Spleen (tissue), 13 donors: ENCODE measurements at regions of chr2 and their contacts with region 1.

Region 1: GRCh38 chr2:20962939-20963557 is 80.8 kb downstream of the APOB start:
- DNase-seq: peak; percentile 81
- H3K4me3 ChIP-seq: no peak overlapping the region
- H3K27ac ChIP-seq: no peak overlapping the region
- H3K4me1 ChIP-seq: no peaks in the 10 kb centered on the region
- H3K27me3 ChIP-seq: peaks cover 0 to 75% (median 3%) of the 10 kb centered on the region in 7 donors
- CTCF ChIP-seq: peak; percentile 64 to 89 (median 84)
- POLR2A ChIP-seq: no peak

Region 2: DNA sequence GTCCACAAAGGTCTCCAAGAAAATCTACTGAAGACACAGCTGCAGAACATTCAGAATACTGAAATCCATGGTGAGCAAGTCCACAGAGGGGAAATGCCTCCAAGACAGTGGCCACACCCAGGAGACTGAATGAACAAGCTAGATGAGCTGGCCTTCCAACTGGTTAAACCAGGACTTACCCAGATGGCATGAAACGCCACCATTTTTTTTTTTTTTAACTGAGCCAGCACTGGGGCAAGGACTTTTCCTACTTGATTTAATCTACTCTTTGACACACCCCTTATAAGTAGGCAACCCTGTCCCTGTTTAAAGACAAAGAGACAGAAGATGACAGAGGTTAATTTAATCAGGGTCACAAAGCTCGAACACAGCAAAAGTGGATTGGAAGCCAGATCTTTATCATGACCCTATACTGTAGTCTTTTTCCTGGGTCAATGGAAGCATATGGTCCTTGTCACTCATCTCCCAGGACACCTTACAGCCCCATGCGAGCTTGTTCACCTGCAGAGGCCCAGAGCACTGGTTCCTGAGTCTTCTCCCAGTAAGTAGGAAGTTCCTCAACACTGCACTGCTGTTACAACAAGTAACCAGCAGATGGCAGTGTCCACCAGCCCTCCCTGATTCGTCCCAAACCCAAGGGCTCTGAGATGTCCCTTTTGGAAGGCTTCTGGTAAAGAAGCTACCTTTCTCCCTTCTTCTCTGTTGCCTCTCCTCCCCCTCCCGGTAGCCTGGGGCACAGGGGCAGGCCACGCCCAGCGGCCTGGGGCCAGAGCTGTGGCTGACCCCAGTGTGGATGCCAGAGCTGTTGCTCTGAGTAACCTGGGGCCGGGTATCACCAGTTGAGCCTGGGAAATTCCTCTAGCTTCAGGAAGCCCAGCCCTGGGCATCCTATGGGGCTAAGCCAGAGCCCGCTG is 301.7 kb before region 1 on chr2:
- intact Hi-C with region 1: loop called (anchors 2 kb)
- DNase-seq: peak; percentile 89
- H3K4me3 ChIP-seq: no peak overlapping the region
- H3K27ac ChIP-seq: no peak overlapping the region
- H3K4me1 ChIP-seq: peaks cover 14 to 24% (median 17%) of the 10 kb centered on the region in 6 donors
- H3K27me3 ChIP-seq: peaks cover 0 to 77% (median 46%) of the 10 kb centered on the region in 7 donors
- CTCF ChIP-seq: peak; percentile 86 to 97 (median 93)
- POLR2A ChIP-seq: no peak

Region 3: GRCh38 chr2:20781656-20782265 is 181.3 kb before region 1 on chr2:
- intact Hi-C with region 1: loop called (anchors 2 kb)
- DNase-seq: no peak
- H3K4me3 ChIP-seq: no peak overlapping the region
- H3K27ac ChIP-seq: no peak overlapping the region
- H3K4me1 ChIP-seq: no peaks in the 10 kb centered on the region
- H3K27me3 ChIP-seq: no peaks in the 10 kb centered on the region
- CTCF ChIP-seq: peak in 10 of 11 experiments; percentile 14 to 75 (median 52)
- POLR2A ChIP-seq: no peak

Region 4: DNA sequence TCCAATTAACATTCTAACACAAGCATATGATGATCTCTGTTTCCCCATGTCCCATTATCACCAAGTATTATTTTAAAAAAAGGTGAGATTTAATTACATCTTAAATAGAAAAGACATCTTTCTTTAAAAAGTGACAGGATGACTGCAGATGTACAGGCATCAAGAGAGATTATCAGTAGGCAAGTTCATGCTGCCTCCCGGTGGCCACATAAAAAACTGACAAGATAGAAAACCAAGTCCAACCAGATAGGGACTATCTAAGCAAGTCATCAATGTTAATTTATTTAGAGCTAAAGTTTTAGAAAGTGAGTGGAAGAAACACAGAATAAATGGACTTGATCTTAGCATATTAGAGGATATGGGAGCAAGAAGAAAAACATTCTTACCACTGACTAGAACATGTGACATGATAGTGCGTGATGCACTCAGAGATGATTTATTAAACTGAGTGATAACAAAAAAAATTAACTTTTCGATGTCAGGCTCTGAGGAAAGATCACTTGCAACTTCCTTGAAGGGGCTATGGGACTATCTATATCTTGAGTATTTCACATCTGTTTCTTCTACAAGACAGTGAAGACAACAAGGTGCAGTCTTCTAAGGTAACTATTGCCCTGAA is 155.4 kb after region 1 on chr2:
- intact Hi-C with region 1: no loop called
- DNase-seq: no peak
- H3K4me3 ChIP-seq: no peak overlapping the region
- H3K27ac ChIP-seq: peak overlapping the region in 4 of 8 donors; percentile 37 to 60 (median 49)
- H3K4me1 ChIP-seq: peaks cover 0 to 9% (median 0%) of the 10 kb centered on the region in 6 donors
- H3K27me3 ChIP-seq: peaks cover 0 to 5% (median 0%) of the 10 kb centered on the region in 7 donors
- CTCF ChIP-seq: peak in 10 of 11 experiments; percentile 7 to 62 (median 48)
- POLR2A ChIP-seq: no peak